ENCODE measurements at regions of chr22 and their contacts with region 1.

Region 1: DNA sequence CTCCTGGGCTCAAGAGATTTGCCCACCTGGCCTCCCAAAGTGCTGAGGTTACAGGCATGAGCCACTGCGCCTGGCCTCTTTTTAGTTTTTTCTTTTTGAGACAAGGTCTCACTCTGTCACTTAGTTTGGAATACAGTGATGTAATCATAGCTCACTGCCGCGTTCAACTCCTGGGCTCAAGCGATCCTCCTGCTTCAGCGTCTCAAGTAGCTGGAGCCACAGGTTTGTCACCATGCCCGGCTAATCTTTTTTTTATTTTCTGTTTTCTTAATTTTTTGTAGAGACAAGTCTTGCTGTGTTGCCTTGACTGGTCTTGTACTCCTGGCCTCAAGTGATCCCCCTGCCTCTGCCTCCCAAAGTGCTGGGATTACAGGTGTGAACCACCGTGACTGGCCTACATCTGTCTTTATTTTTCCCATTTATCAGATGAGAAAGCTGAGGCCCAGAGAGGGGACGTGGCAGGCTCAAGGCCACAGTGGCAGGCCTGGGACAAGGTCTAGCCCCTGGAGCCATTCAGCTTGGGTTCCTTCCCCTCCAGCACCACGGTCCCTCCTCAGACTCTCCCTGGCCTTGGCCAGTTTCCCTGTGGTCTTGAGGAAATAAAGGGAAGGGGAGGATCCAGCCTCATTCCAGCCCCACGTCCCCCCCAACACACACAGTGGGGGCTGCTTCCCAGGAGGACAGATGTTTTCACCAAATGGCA is 2.8 kb upstream of the KDELR3 start:
- DNase-seq: no peak
- H3K4me3 ChIP-seq: no peak overlapping the region
- H3K27ac ChIP-seq: no peak overlapping the region
- H3K4me1 ChIP-seq: peaks cover 19% of the 10 kb centered on the region
- H3K27me3 ChIP-seq: peaks cover 7% of the 10 kb centered on the region; the same call in 1 of the 2 replicates
- CTCF ChIP-seq: no peak

Region 2: DNA sequence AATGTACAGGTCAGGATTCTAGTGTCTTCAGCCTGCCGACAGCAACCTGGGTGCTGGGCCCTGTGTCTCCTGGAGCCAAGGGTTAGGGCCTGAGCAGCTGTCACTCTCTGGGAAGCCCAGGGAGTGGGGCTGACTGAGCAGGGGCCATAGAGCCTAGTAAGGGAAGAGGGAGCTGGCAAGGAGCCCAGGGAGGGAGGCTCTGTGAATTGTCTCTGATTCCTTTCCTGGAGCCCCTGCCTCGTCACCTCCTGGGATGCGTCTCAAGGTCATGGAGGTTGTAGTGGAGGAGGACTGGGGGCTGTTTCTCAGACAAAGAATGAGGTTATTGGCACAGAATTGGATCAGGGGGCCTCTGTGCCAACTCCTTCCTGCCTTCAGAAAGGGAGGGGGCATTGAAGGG is 492.6 kb before region 1 on chr22:
- CTCF ChIA-PET with region 1: no interaction called
- POLR2A ChIA-PET with region 1: no interaction called
- intact Hi-C with region 1: no loop called
- DNase-seq: no peak
- H3K4me3 ChIP-seq: no peak overlapping the region
- H3K27ac ChIP-seq: no peak overlapping the region
- H3K4me1 ChIP-seq: no peaks in the 10 kb centered on the region
- H3K27me3 ChIP-seq: no peaks in the 10 kb centered on the region
- CTCF ChIP-seq: no peak

Region 3: DNA sequence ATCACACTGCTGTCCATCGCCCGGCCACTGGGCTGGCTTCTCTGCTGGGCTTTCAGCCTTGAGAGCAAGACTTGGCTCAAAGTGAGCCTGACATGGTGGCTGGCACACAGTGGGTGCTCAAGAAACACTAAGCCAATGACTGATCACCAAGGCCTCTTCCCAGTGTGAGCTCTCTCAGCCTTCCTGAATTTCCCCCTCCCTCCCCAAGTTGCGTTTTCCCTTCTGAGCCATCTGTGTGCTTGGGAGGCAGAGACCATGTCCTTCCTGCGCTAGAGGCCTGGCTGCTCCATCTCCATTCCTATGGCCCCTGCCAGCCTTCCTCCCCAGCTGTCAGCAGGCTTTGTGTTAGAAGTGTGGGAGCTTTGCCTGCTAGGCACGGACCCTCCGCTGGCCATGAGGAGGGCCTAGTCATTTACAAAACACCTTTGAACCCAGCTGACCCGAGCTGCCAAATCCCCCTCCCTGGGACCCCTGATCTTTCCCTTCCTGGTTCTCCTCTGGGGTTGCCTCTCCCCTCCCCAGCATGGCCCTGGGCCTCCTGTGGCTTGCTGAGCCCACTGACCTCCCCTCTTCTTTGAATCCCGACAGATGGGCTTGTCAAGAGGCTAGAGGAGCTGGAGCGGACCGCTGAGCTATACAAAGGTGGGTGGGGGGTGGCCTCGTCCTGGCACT is 394.8 kb before region 1 on chr22:
- CTCF ChIA-PET with region 1: interaction called, 12 read pairs
- POLR2A ChIA-PET with region 1: no interaction called
- intact Hi-C with region 1: no loop called
- DNase-seq: no peak
- H3K4me3 ChIP-seq: no peak overlapping the region
- H3K27ac ChIP-seq: no peak overlapping the region
- H3K4me1 ChIP-seq: no peaks in the 10 kb centered on the region
- H3K27me3 ChIP-seq: no peaks in the 10 kb centered on the region
- CTCF ChIP-seq: no peak

Measured in PC-9 (cell line).